ENCODE measurements at regions of chr15 and their contacts with region 1.

Region 1: GRCh38 chr15:65841121-65841925 is 28.0 kb upstream of the RAB11A start:
- DNase-seq: no peak
- ATAC-seq: no peak
- H3K4me3 Mint-ChIP-seq: no peak overlapping the region
- H3K27ac Mint-ChIP-seq: no peak overlapping the region
- H3K4me1 Mint-ChIP-seq: peaks cover 3% of the 10 kb centered on the region
- H3K27me3 Mint-ChIP-seq: peaks cover 7% of the 10 kb centered on the region

Region 2: GRCh38 chr15:64950888-64951287 is 890.4 kb before region 1 on chr15:
- CTCF ChIA-PET with region 1: no interaction called
- POLR2A ChIA-PET with region 1: no interaction called
- DNase-seq: no peak
- ATAC-seq: no peak
- H3K4me3 Mint-ChIP-seq: no peak overlapping the region
- H3K27ac Mint-ChIP-seq: peak overlapping the region; percentile 20
- H3K4me1 Mint-ChIP-seq: no peaks in the 10 kb centered on the region
- H3K27me3 Mint-ChIP-seq: no peaks in the 10 kb centered on the region

Region 3: DNA sequence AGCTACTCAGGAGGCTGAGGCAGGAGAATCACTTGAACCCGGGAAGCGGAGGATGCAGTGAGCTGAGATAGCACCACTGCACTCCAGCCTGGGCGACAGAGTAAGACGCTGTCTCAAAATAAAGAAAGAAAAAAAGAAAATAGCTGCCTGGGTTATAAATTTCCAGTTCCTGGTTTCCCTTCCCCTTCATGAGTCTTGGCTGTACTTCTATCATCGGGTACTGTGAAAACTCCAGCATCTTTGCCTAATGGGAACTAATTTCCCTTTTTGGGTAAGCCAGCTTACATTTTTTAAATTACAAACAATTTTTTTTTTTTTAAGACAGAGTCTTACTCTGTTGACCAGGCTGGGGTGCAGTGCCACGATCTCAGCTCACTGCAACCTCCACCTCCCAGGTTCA is 64.3 kb before region 1 on chr15:
- CTCF ChIA-PET with region 1: no interaction called
- POLR2A ChIA-PET with region 1: no interaction called
- DNase-seq: no peak
- ATAC-seq: no peak
- H3K4me3 Mint-ChIP-seq: no peak overlapping the region
- H3K27ac Mint-ChIP-seq: no peak overlapping the region
- H3K4me1 Mint-ChIP-seq: peaks cover 36% of the 10 kb centered on the region
- H3K27me3 Mint-ChIP-seq: no peaks in the 10 kb centered on the region

Region 4: DNA sequence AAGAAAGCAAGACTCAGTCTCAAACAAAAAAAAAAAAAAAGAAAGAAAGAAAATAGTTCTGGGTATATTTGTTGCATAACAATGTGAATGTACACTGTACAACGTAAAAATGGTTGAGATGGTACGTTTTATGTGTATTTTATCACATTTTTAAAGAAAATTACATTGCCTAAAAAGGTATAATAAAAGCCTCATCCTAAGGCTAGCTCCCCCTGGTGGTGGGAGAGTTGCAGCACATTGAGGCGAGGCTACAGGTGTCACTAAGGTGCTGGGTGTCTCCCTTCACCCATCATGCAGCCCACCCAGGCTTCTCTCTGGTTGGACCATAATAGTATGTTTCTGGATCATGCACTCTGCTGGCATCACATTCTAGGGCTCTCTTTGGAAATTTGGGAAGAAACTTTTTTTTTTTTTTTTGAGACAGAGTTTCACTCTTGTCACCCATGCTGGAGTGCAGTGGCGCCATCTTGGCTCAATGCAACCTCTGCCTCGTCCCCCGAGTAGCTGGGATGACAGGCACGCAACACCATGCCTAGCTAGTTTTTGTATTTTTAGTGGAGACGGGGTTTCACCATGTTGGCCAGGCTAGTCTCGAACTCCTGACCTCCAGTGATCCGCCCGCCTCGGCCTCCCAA is 15.6 kb after region 1 on chr15:
- CTCF ChIA-PET with region 1: interaction called, 11 read pairs
- POLR2A ChIA-PET with region 1: no interaction called
- DNase-seq: peak; percentile 90
- ATAC-seq: peak; percentile 93
- H3K4me3 Mint-ChIP-seq: no peak overlapping the region
- H3K27ac Mint-ChIP-seq: no peak overlapping the region
- H3K4me1 Mint-ChIP-seq: peaks cover 8% of the 10 kb centered on the region
- H3K27me3 Mint-ChIP-seq: peaks cover 6% of the 10 kb centered on the region

Region 5: GRCh38 chr15:65962187-65962586 is 120.9 kb after region 1 on chr15:
- CTCF ChIA-PET with region 1: no interaction called
- POLR2A ChIA-PET with region 1: no interaction called
- DNase-seq: no peak
- ATAC-seq: no peak
- H3K4me3 Mint-ChIP-seq: no peak overlapping the region
- H3K27ac Mint-ChIP-seq: no peak overlapping the region
- H3K4me1 Mint-ChIP-seq: no peaks in the 10 kb centered on the region
- H3K27me3 Mint-ChIP-seq: peaks cover 16% of the 10 kb centered on the region

Measured in activated CD8-positive, alpha-beta T cell treated with anti-CD3 and anti-CD28 coated beads, Interleukin-2, amount 10 ng/mL, durations not matched to agents 7 days and 5 days (primary cell).